ENCODE measurements at regions of chr11 and their contacts with region 1.

Region 1: GRCh38 chr11:63518548-63518947 is 12.7 kb downstream of the LGALS12 start:
- DNase-seq: peak in 2 of 4 experiments; percentile 18 to 64
- ATAC-seq: peak; percentile 51
- H3K4me3 ChIP-seq: no peak overlapping the region
- H3K27ac ChIP-seq: peak overlapping the region; percentile 3; the same call in 1 of the 3 replicates
- H3K4me1 ChIP-seq: peaks cover 16 to 29% of the 10 kb centered on the region in 2 experiments
- H3K27me3 ChIP-seq: no peaks in the 10 kb centered on the region
- CTCF ChIP-seq: no peak
- EP300 ChIP-seq: peak; percentile 75
- POLR2A ChIP-seq: no peak
- RAD21 ChIP-seq: peak in 1 of 2 experiments; percentile 17; a peak in 1 of 4 replicates

Region 2: DNA sequence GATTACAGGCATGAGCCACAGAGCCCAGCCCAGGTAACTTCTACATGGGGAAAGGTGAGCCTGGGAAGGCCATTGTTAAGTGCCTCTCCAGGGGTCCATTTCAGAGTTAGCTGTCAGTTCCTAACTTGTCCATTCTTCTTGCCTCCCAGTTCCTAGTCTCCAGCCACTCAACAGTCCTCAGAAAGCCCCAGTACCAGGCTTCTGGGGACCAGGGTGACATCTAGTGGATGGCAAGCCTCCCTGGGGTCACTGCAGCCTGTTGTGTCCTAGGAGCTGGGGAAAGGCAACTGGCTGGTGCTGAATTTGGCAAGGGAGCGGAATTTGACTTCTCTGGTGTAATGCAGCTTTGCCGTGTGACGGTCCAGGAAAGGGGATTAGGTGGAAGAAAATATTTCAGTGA is 10.5 kb before region 1 on chr11:
- CTCF ChIA-PET with region 1: no interaction called
- POLR2A ChIA-PET with region 1: interaction called, 11 read pairs
- in situ Hi-C with region 1: no loop called
- intact Hi-C with region 1: no loop called
- DNase-seq: peak; percentile 40 to 82 (median 60)
- ATAC-seq: peak; percentile 91
- H3K4me3 ChIP-seq: no peak overlapping the region
- H3K27ac ChIP-seq: no peak overlapping the region
- H3K4me1 ChIP-seq: peaks cover 32 to 46% of the 10 kb centered on the region in 2 experiments
- H3K27me3 ChIP-seq: no peaks in the 10 kb centered on the region
- CTCF ChIP-seq: peak; percentile 75 to 89 (median 85)
- EP300 ChIP-seq: no peak; the same call in 1 of the 2 replicates
- POLR2A ChIP-seq: no peak
- RAD21 ChIP-seq: peak; percentile 88 to 92

Region 3: GRCh38 chr11:63582935-63583677 is 64.6 kb after region 1 on chr11:
- CTCF ChIA-PET with region 1: no interaction called
- POLR2A ChIA-PET with region 1: no interaction called
- in situ Hi-C with region 1: no loop called
- intact Hi-C with region 1: loop called (anchors 2 kb)
- DNase-seq: no peak
- ATAC-seq: no peak
- H3K4me3 ChIP-seq: no peak overlapping the region
- H3K27ac ChIP-seq: no peak overlapping the region
- H3K4me1 ChIP-seq: peaks cover 0 to 6% of the 10 kb centered on the region in 2 experiments; a peak in 3 of 5 replicates
- H3K27me3 ChIP-seq: 0 out of 5 replicates have a peak, but pooled peaks cover 0 to 4% of the 10 kb centered on the region in 2 experiments
- CTCF ChIP-seq: no peak
- EP300 ChIP-seq: no peak
- POLR2A ChIP-seq: no peak
- RAD21 ChIP-seq: no peak

Region 4: DNA sequence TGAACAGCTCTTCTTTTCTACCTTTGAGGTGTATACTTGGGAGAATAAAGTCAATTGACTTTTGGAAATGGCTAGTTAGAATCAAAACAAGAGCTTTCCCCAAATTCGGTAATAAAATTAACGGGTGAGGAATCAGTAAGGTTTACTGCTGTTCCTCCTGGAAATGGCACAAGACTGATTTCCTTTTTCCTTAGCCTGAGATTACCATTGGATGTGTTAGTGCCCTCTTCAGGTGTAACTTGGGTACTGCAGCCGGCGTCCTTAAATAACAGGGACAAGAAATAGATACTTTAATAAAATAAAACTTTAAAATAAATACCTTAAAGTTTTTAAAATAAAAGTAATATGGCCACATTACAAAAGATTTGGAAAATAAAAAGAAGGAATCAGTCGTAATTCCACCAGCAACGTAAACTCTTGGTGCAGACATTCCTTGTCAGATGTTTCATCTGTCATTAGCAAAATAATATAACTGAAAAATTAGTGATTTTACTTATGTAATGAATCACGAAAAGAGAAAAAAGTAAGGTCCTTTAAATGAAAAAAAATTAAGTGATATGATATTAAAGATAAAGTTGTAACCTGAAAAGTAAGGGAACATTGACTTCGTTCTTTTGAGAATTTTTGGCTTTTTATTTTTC is 220.3 kb after region 1 on chr11:
- CTCF ChIA-PET with region 1: no interaction called
- POLR2A ChIA-PET with region 1: no interaction called
- in situ Hi-C with region 1: no loop called
- intact Hi-C with region 1: no loop called
- DNase-seq: peak; percentile 49 to 79 (median 58)
- ATAC-seq: peak; percentile 68
- H3K4me3 ChIP-seq: no peak overlapping the region
- H3K27ac ChIP-seq: no peak overlapping the region
- H3K4me1 ChIP-seq: peaks cover 7 to 8% of the 10 kb centered on the region in 2 experiments; a peak in 3 of 5 replicates
- H3K27me3 ChIP-seq: no peaks in the 10 kb centered on the region
- CTCF ChIP-seq: peak; percentile 70 to 88 (median 75)
- EP300 ChIP-seq: no peak
- POLR2A ChIP-seq: no peak
- RAD21 ChIP-seq: peak; percentile 62 to 65